GM12878 (cell line): ENCODE measurements at regions of chr5 and their contacts with region 1.

Region 1: DNA sequence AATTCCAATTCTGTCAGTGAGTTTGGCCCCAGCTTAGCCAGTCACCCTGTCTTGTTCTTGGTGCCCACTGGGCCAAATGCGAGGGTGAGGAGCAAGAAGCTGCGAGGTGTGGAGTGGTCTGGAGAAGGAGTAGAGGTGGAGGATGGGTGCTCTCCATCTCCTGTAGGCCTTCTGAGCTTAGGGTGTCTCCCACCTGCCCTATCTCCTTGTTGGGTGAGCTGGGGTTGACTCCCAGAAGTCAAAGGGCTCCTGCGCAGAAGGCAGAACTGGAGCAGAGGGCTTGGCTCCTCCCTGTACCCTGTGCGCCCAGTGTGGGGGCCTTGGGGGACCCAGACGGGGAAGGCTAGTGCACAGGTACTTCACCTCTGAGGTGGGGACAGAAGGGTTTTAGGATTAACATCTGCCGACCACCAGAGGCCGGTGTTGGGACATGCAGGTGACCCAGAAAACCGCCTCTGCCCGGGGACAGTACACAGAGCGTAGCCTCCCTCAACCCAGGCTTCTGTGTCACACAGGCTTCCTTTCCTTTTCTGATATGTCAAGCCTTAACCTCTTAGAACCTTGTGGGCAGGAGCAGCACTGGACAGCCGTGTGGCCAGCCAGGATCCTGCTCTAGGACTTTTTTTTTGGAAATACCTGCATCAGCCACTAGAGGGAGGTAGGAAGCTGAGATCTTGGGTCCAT is 16.9 kb downstream of the IL5 start:
- DNase-seq: peak; percentile 53
- ATAC-seq: peak; percentile 73
- H3K4me3 ChIP-seq: no peak overlapping the region
- H3K27ac ChIP-seq: peak overlapping the region; percentile 84; the same call in 1 of the 2 replicates
- H3K4me1 ChIP-seq: peaks cover 32% of the 10 kb centered on the region
- H3K27me3 ChIP-seq: no peaks in the 10 kb centered on the region
- CTCF ChIP-seq: peak; percentile 57 to 87 (median 76); a peak in 5 of 6 replicates
- EP300 ChIP-seq: no peak
- POLR2A ChIP-seq: no peak
- RAD21 ChIP-seq: peak; percentile 80

Region 2: DNA sequence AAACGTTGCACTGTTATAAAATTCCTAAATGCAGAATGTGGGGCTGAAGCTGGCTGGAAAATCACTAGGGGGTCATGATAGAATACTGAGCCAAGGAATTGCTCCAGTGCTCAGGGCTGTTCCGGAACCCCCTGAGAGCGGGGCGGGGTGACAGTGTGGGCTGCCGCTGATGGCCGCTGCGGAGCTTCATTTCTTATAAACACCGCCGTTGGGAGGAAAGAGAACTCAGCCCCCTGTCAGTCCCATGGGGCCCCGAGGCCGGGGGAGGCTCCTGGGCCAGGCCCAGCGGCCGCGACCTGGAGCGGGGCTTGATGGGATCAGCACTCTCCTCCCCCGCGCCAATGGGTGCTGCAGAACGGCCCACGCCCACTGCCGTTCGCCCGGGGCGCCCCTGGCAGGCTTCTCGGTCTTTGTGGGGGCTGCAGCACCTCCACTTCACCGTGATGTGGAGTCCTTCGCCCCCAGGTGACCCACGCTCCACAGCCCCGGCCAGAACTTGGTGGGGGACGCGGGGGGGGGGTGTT is 30.7 kb before region 1 on chr5:
- CTCF ChIA-PET with region 1: interaction called, 26 read pairs
- POLR2A ChIA-PET with region 1: no interaction called
- RAD21 ChIA-PET with region 1: interaction called, 13 read pairs
- SMC1A ChIA-PET with region 1: interaction called, 4 read pairs
- in situ Hi-C with region 1: no loop called
- intact Hi-C with region 1: no loop called
- DNase-seq: no peak
- ATAC-seq: peak; percentile 69
- H3K4me3 ChIP-seq: peak overlapping the region; percentile 85
- H3K27ac ChIP-seq: peak overlapping the region; percentile 63
- H3K4me1 ChIP-seq: peaks cover 49% of the 10 kb centered on the region
- H3K27me3 ChIP-seq: no peaks in the 10 kb centered on the region
- CTCF ChIP-seq: 0 out of 6 replicates have a peak, but pooled peaks of 1 of the 3 experiments have one; percentile 7
- EP300 ChIP-seq: peak in 1 of 2 experiments; percentile 38; a peak in 2 of 4 replicates
- POLR2A ChIP-seq: peak; percentile 48; the same call in 1 of the 2 replicates
- RAD21 ChIP-seq: no peak

Region 3: GRCh38 chr5:132556763-132557477 is 30.5 kb after region 1 on chr5 and contains the start of gene RAD50:
- CTCF ChIA-PET with region 1: interaction called, 18 read pairs
- POLR2A ChIA-PET with region 1: interaction called, 7 read pairs
- RAD21 ChIA-PET with region 1: interaction called, 3 read pairs
- SMC1A ChIA-PET with region 1: interaction called, 6 read pairs
- in situ Hi-C with region 1: no loop called
- intact Hi-C with region 1: no loop called
- DNase-seq: peak; percentile 86
- ATAC-seq: peak; percentile 99
- H3K4me3 ChIP-seq: peak within 1 kb of the TSS; percentile 88
- H3K27ac ChIP-seq: peak within 1 kb of the TSS; percentile 96
- H3K4me1 ChIP-seq: no peaks in the 10 kb centered on the region; the same call in 1 of the 2 replicates
- H3K27me3 ChIP-seq: no peaks in the 10 kb centered on the region
- CTCF ChIP-seq: no peak
- EP300 ChIP-seq: no peak
- POLR2A ChIP-seq: peak; percentile 99
- RAD21 ChIP-seq: no peak
- polyA plus RNA-seq, gene RAD50: 12.8 to 19.5 TPM

Region 4: DNA sequence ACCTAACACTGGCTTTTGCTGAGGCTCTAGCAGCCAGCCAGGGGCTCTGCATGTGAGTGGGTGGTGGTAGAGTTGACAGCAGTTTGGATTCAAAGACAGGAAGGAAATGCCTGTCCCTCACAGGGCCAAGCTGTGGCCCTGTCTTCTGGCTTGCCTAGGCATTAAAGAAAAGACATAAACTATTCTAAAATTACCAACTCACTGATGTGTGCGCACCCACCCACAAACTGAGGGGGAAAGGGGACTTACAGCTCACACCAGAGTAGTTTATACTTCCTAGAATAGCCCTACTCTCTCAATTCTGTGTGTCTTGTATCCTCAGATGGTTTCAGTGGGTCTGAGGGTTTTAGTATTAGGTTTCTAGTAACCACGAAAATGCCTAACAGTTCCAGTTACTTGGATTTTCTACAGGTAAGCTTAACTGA is 113.3 kb after region 1 on chr5:
- CTCF ChIA-PET with region 1: interaction called, 15 read pairs
- POLR2A ChIA-PET with region 1: no interaction called
- RAD21 ChIA-PET with region 1: interaction called, 4 read pairs
- SMC1A ChIA-PET with region 1: interaction called, 24 read pairs
- in situ Hi-C with region 1: no loop called
- intact Hi-C with region 1: loop called (anchors 5 kb)
- DNase-seq: peak; percentile 82
- ATAC-seq: peak; percentile 78
- H3K4me3 ChIP-seq: no peak overlapping the region
- H3K27ac ChIP-seq: peak overlapping the region; percentile 28
- H3K4me1 ChIP-seq: peaks cover 59% of the 10 kb centered on the region
- H3K27me3 ChIP-seq: no peaks in the 10 kb centered on the region
- CTCF ChIP-seq: no peak
- EP300 ChIP-seq: peak in 1 of 2 experiments; percentile 70; a peak in 2 of 4 replicates
- POLR2A ChIP-seq: no peak
- RAD21 ChIP-seq: no peak

Region 5: DNA sequence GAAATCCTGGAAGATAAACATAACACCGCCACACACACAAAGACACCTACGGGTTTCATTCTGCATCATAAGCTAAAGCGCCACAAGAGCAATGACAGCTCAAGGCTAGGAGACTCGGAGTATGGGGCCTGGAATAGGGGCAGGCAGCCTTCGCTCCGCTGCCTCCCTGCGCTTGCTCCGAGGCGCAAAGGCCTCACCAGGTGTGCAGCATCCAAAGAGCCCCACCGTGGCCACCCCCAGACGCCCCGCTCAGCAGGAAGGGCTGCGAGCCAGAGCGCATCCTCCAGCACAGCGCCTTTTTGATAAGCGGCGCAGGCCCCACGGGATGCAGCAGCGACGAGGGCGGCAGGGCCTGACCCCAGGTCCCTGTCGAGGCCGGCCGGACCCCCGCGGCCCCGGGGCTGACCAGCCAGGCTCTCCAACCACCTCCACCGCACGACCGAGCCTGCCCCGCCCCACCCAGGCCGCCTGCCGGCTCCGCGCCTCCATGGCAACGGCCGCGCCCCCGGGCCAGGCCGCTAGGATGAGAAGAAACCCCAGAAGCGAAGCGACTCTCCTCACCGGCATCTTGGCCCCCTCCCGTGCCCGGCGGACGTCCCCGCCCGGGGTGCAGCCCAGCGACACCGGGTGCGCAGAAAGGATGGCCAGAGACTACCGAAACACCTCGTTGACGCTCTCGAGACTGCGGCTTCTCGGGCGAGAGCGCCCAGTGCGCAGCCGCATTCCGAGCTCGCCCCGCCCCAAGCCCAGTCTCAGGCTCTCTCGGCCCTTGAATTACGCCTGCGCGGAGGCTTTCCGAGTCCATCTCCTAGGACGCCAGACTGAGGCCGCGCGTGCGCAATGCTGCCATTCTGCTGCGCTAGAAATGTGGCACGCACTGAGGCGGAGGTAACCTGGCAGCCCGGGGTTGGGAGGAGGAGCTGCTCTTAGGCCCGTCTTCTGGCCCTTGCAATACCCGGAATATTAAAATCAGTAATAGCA is 210.7 kb after region 1 on chr5 and contains the start of gene KIF3A:
- CTCF ChIA-PET with region 1: interaction called, 16 read pairs
- POLR2A ChIA-PET with region 1: no interaction called
- RAD21 ChIA-PET with region 1: interaction called, 5 read pairs
- SMC1A ChIA-PET with region 1: interaction called, 5 read pairs
- in situ Hi-C with region 1: no loop called
- intact Hi-C with region 1: loop called (anchors 5 kb)
- DNase-seq: peak; percentile 94
- ATAC-seq: peak; percentile 91
- H3K4me3 ChIP-seq: peak within 1 kb of the TSS; percentile 80
- H3K27ac ChIP-seq: peak within 1 kb of the TSS; percentile 52
- H3K4me1 ChIP-seq: no peaks in the 10 kb centered on the region
- H3K27me3 ChIP-seq: no peaks in the 10 kb centered on the region
- CTCF ChIP-seq: no peak
- EP300 ChIP-seq: no peak
- POLR2A ChIP-seq: peak; percentile 89
- RAD21 ChIP-seq: no peak
- polyA plus RNA-seq, gene KIF3A: 2.7 to 3.0 TPM

Region 6: DNA sequence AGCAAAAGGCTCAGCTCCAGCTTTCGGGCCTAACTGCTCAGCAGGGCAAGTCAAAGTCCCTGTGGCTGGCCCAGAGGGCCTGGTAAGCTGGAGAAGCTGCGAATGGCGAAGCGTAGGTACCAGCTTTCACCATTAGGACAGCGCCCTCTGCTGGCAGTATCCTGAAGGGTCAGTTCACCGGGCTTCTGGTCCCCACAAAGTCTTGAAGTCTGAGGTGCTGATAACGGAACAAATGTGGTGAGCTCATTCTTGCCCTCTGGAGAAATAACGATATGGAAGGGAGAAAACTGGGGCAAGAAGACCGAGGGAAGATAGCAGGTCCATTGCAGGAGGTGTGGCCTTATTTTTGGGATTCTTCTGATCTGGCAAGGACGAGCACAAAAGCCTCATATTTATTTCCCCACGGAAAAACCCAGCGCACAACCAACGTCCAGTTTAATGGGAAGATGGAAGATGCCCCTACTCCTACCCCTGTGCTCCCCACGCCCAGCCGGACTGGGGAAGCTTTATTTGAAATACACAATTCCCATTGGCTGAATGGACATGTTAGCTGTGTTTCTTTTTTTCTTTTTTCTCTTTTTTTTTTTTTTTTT is 293.8 kb after region 1 on chr5:
- CTCF ChIA-PET with region 1: interaction called, 101 read pairs
- POLR2A ChIA-PET with region 1: no interaction called
- RAD21 ChIA-PET with region 1: interaction called, 88 read pairs
- SMC1A ChIA-PET with region 1: interaction called, 75 read pairs
- in situ Hi-C with region 1: loop called (anchors 10 kb)
- intact Hi-C with region 1: loop called (anchors 1 kb)
- DNase-seq: peak; percentile 65
- ATAC-seq: peak; percentile 97
- H3K4me3 ChIP-seq: no peak overlapping the region
- H3K27ac ChIP-seq: no peak overlapping the region
- H3K4me1 ChIP-seq: no peaks in the 10 kb centered on the region; the same call in 1 of the 2 replicates
- H3K27me3 ChIP-seq: no peaks in the 10 kb centered on the region; a peak in 2 of 4 replicates
- CTCF ChIP-seq: peak; percentile 89 to 94 (median 89)
- EP300 ChIP-seq: no peak
- POLR2A ChIP-seq: no peak
- RAD21 ChIP-seq: peak; percentile 87